ENCODE measurements at regions of chr16 and their contacts with region 1.

Region 1: GRCh38 chr16:50741808-50742575 is at the start of gene CYLD:
- DNase-seq: peak; percentile 100
- ATAC-seq: peak; percentile 89 to 95
- H3K4me3 ChIP-seq: peak within 1 kb of the TSS; percentile 61 to 98 (median 90)
- H3K27ac ChIP-seq: peak within 1 kb of the TSS; percentile 85 to 99 (median 93)
- H3K4me1 ChIP-seq: peaks cover 29 to 40% of the 10 kb centered on the region in 2 donors
- H3K27me3 ChIP-seq: no peaks in the 10 kb centered on the region
- CTCF ChIP-seq: no peak
- POLR2A ChIP-seq: peak; percentile 88 to 97
- total RNA-seq, gene CYLD: 49.2 to 177 (median 135) TPM

Region 2: DNA sequence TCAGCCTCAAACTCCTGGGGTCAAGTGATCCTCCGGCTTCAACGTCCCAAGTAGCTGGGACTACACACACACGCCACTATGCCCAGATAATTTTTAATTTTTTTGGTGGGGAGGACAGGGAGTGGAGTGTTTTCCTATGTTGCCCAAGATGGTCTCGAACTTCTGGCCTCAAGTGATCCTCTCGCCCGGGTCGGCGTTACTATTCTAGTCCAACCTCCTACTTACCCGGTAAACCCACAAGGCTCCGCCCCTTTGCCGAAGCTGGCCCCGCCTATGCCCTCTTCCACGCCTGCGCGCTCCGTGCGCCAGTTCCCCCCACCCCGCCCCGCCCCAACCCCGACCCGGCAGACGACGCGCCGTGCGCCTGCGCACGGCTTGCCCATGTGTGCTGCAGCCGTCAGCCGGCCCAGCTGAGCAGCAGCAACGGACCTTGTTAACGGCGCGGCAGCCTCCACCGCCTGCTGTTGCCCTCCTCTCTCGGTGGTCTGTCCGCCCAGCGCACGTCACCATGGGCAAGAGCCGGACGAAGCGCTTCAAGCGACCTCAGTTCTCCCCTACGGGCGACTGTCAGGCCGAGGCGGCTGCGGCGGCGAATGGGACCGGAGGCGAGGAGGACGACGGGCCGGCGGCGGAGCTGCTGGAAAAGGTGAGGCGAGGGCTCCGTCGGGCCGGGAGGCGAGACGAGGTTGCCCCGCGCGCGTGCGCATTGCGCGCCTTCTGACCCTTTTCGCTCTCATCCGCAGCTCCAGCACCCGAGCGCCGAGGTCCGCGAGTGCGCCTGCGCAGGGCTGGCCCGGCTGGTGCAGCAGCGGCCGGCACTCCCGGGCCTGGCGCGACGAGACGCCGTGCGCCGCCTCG is 676.1 kb before region 1 on chr16 and contains the start of gene HEATR3:
- in situ Hi-C with region 1: no loop called
- intact Hi-C with region 1: loop called (anchors 10 kb)
- DNase-seq: peak; percentile 79 to 89
- ATAC-seq: peak; percentile 97 to 98
- H3K4me3 ChIP-seq: peak within 1 kb of the TSS; percentile 85 to 99 (median 85)
- H3K27ac ChIP-seq: peak within 1 kb of the TSS; percentile 91 to 99 (median 94)
- H3K4me1 ChIP-seq: peaks cover 19 to 27% of the 10 kb centered on the region in 2 donors
- H3K27me3 ChIP-seq: no peaks in the 10 kb centered on the region
- CTCF ChIP-seq: no peak
- POLR2A ChIP-seq: peak; percentile 56 to 61
- total RNA-seq, gene HEATR3: 13.1 to 25.8 (median 14.2) TPM

Region 3: GRCh38 chr16:50548125-50548908 is 193.7 kb before region 1 on chr16 and contains the start of gene NKD1:
- in situ Hi-C with region 1: no loop called
- intact Hi-C with region 1: loop called (anchors 5 kb)
- DNase-seq: peak; percentile 23 to 31
- ATAC-seq: peak; percentile 89 to 91
- H3K4me3 ChIP-seq: peak within 1 kb of the TSS; percentile 51 to 78 (median 66)
- H3K27ac ChIP-seq: no peak within 1 kb of the TSS
- H3K4me1 ChIP-seq: peaks cover 0 to 9% of the 10 kb centered on the region in 2 donors
- H3K27me3 ChIP-seq: peaks cover 6 to 28% (median 16%) of the 10 kb centered on the region in 3 donors
- CTCF ChIP-seq: no peak
- POLR2A ChIP-seq: peak; percentile 54 to 63
- total RNA-seq, gene NKD1: 0.10 to 0.75 (median 0.19) TPM

Region 4: DNA sequence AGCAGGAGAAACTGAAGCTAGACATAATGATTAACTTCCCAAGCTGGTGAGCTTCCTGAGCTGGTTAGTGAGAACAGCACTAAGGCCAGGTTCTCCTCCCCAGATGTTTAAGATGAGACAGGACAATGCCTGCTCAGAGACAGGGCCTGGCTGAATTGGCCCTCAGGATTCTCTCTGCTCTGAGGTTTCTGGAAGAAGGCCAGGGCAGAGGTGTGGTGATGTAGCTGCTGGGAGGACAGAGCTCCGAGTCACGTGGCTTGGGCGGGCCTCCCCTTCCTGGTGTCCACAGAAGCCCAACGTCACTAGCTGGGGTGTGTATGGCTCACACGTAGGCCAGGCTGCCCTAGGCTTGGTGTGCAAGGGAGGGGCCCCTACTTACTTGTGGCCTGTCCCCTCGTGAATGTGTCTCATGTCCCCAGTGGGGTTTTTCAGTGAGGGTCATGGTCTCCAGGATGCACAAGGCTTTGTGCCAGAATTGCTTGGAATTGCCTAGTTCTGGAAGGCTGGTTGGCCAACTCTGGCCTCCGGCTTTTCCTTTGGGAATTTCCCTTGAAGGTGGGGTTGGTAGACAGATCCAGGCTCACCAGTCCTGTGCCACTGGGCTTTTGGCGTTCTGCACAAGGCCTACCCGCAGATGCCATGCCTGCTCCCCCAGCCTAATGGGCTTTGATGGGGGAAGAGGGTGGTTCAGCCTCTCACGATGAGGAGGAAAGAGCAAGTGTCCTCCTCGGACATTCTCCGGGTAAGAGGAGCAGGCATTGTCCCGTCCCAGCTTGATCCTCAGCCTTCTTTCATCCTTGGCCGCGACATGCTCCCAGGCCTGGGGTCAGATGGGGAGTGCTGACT is 45.2 kb before region 1 on chr16:
- in situ Hi-C with region 1: loop called in 1 of 4 experiments (anchors 5 kb)
- intact Hi-C with region 1: loop called (anchors 2 kb)
- DNase-seq: peak; percentile 55 to 74
- ATAC-seq: no peak
- H3K4me3 ChIP-seq: no peak overlapping the region
- H3K27ac ChIP-seq: peak overlapping the region; percentile 81 to 87 (median 85)
- H3K4me1 ChIP-seq: peaks cover 37 to 46% of the 10 kb centered on the region in 2 donors
- H3K27me3 ChIP-seq: no peaks in the 10 kb centered on the region
- CTCF ChIP-seq: no peak
- POLR2A ChIP-seq: peak; percentile 23 to 35

Measured in gastrocnemius medialis (tissue), 4 donors.